ENCODE measurements at regions of chr7 and their contacts with region 1.

Region 1: DNA sequence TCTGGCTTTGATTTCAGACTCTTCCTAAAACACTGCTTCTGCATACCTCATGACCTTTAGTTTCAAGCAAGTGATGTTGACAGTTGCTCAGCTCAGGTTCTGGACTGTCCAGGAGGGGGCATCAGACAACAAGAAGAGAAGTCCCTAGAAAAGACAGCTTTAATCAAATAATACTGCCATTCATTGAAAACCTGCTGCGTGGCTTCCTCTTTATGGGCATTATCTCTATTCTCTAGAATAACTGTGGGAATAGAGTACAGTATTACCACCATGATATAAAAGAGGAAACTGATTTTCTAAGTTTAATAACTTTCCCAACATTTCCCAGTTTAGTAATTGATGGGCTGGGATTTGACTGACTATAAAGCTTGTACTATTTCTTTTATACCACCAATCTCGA is 170.4 kb downstream of the SNX13 start:
- DNase-seq: peak; percentile 21 to 59
- H3K4me3 ChIP-seq: no peak overlapping the region
- H3K27ac ChIP-seq: no peak overlapping the region
- H3K4me1 ChIP-seq: peaks cover 0 to 8% (median 5%) of the 10 kb centered on the region in 4 experiments; a peak in 5 of 7 replicates
- H3K27me3 ChIP-seq: no peaks in the 10 kb centered on the region
- CTCF ChIP-seq: peak in 2 of 3 experiments; percentile 68 to 83; a peak in 3 of 4 replicates
- EP300 ChIP-seq: no peak
- POLR2A ChIP-seq: no peak
- RAD21 ChIP-seq: peak; percentile 94 to 96

Region 2: DNA sequence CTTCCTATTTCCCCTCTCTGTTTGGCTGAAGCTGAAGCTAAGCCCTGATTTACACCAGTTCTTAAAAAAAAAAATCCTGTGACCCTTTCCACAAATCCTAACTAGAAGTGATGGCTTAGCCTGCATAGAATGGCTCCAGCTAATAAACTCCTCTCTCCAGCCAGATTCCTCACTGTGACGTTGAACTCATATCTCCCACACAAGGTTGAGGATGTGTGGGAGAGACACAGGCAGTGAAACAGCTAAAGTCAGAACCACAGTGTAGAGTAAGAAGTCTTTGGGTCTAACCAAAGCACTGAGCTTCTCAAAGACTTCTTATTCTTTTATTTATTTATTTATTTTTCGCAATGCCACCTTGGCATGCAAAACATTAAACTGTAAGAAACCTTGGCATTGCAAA is 98.0 kb before region 1 on chr7:
- CTCF ChIA-PET with region 1: no interaction called
- POLR2A ChIA-PET with region 1: no interaction called
- DNase-seq: no peak
- H3K4me3 ChIP-seq: no peak overlapping the region
- H3K27ac ChIP-seq: no peak overlapping the region
- H3K4me1 ChIP-seq: no peaks in the 10 kb centered on the region
- H3K27me3 ChIP-seq: peaks cover 0 to 1% (median 0%) of the 10 kb centered on the region in 4 experiments; a peak in 2 of 7 replicates
- CTCF ChIP-seq: no peak
- EP300 ChIP-seq: no peak
- POLR2A ChIP-seq: no peak
- RAD21 ChIP-seq: no peak

Region 3: GRCh38 chr7:17706734-17707133 is 63.2 kb before region 1 on chr7:
- CTCF ChIA-PET with region 1: interaction called, 15 read pairs
- POLR2A ChIA-PET with region 1: no interaction called
- DNase-seq: peak in 1 of 2 experiments; percentile 54
- H3K4me3 ChIP-seq: no peak overlapping the region
- H3K27ac ChIP-seq: no peak overlapping the region
- H3K4me1 ChIP-seq: no peaks in the 10 kb centered on the region; a peak in 1 of 7 replicates
- H3K27me3 ChIP-seq: no peaks in the 10 kb centered on the region
- CTCF ChIP-seq: peak; percentile 31 to 79 (median 72)
- EP300 ChIP-seq: no peak
- POLR2A ChIP-seq: no peak
- RAD21 ChIP-seq: peak; percentile 96 to 97

Region 4: DNA sequence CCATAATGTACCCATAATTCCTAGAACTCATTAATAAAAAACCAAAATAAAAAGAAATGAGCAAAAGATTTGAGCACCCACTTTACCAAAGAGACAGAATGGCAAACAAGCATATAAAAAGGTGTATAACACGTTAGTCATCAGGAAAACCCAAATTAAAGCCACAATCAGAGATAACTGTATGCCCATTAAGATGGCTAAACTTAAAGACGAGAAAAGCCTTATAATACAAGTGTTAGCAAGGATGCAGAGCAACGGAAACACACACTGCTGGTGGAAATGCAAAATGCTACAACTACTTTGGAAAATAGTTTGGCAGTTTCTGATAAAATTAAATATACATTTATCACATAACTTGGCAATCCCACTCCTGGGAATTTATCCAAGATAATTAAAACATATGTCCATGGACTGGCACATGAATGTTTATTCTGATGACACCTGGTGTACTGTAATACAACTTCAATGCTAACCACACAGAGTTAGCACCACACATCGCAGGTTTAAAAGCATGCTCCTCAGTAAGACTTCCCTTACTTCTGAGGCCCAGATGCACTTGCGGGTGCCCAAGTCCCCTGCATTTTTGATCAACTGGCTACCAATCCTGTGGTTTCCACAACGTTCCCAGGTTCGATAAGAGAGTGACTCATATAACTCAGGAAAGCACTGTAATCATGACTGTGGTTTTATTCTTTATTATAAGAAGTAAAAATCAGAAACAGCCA is 11.7 kb after region 1 on chr7:
- CTCF ChIA-PET with region 1: interaction called, 20 read pairs
- POLR2A ChIA-PET with region 1: no interaction called
- DNase-seq: no peak
- H3K4me3 ChIP-seq: no peak overlapping the region
- H3K27ac ChIP-seq: no peak overlapping the region
- H3K4me1 ChIP-seq: no peaks in the 10 kb centered on the region
- H3K27me3 ChIP-seq: no peaks in the 10 kb centered on the region
- CTCF ChIP-seq: no peak
- EP300 ChIP-seq: no peak
- POLR2A ChIP-seq: no peak
- RAD21 ChIP-seq: no peak

Region 5: GRCh38 chr7:17863095-17863808 is 93.3 kb after region 1 on chr7:
- CTCF ChIA-PET with region 1: interaction called, 21 read pairs
- POLR2A ChIA-PET with region 1: interaction called, 3 read pairs
- DNase-seq: no peak
- H3K4me3 ChIP-seq: no peak overlapping the region
- H3K27ac ChIP-seq: 0 out of 2 replicates have a peak overlapping the region, but pooled peaks have one; percentile 7
- H3K4me1 ChIP-seq: peaks cover 0 to 3% (median 0%) of the 10 kb centered on the region in 4 experiments; a peak in 1 of 7 replicates
- H3K27me3 ChIP-seq: no peaks in the 10 kb centered on the region
- CTCF ChIP-seq: no peak
- EP300 ChIP-seq: no peak
- POLR2A ChIP-seq: no peak
- RAD21 ChIP-seq: no peak

Region 6: GRCh38 chr7:18064242-18064838 is 294.4 kb after region 1 on chr7:
- CTCF ChIA-PET with region 1: interaction called, 12 read pairs
- POLR2A ChIA-PET with region 1: no interaction called
- DNase-seq: peak in 1 of 2 experiments; percentile 80
- H3K4me3 ChIP-seq: no peak overlapping the region
- H3K27ac ChIP-seq: no peak overlapping the region
- H3K4me1 ChIP-seq: peaks cover 0 to under 1% (median 0%) of the 10 kb centered on the region in 4 experiments; a peak in 1 of 7 replicates
- H3K27me3 ChIP-seq: peaks cover 0 to 1% (median 0%) of the 10 kb centered on the region in 4 experiments; a peak in 1 of 7 replicates
- CTCF ChIP-seq: peak in 2 of 3 experiments; percentile 60 to 79; a peak in 3 of 4 replicates
- EP300 ChIP-seq: no peak
- POLR2A ChIP-seq: no peak
- RAD21 ChIP-seq: peak; percentile 65 to 73

Measured in H1 (cell line).